A673 (cell line): ENCODE measurements at regions of chr14 and their contacts with region 1.

Region 1: GRCh38 chr14:68248481-68249255 is 429.1 kb downstream of the RAD51B start:
- DNase-seq: peak; percentile 77
- H3K4me3 ChIP-seq: no peak overlapping the region
- H3K27ac ChIP-seq: no peak overlapping the region
- H3K4me1 ChIP-seq: peaks cover 58% of the 10 kb centered on the region
- H3K27me3 ChIP-seq: no peaks in the 10 kb centered on the region
- CTCF ChIP-seq: peak; percentile 69

Region 2: GRCh38 chr14:67943947-67944346 is 304.7 kb before region 1 on chr14:
- CTCF ChIA-PET with region 1: no interaction called
- POLR2A ChIA-PET with region 1: no interaction called
- intact Hi-C with region 1: loop called (anchors 2 kb)
- DNase-seq: peak; percentile 86
- H3K4me3 ChIP-seq: no peak overlapping the region
- H3K27ac ChIP-seq: no peak overlapping the region
- H3K4me1 ChIP-seq: no peaks in the 10 kb centered on the region
- H3K27me3 ChIP-seq: no peaks in the 10 kb centered on the region
- CTCF ChIP-seq: peak; percentile 85

Region 3: DNA sequence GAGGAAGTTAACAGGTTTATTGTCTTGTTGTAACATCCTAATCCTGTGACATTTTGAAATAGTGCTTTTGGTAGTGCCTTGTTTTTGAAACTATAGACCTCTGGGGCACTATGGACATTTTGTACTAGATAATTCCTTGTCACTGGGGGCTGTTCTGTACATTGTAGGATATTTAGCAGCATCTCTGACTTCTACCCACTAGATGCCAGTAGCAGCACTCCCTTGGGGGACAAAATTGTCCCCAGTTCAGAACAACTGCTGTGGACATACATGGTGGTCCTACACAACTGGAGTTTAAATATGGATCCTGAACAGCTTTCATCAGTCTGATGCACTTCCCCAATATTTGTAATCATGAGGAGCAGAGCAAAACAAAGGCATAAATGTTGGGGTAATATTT is 164.4 kb before region 1 on chr14:
- CTCF ChIA-PET with region 1: no interaction called
- POLR2A ChIA-PET with region 1: no interaction called
- intact Hi-C with region 1: loop called (anchors 5 kb)
- DNase-seq: peak; percentile 51
- H3K4me3 ChIP-seq: no peak overlapping the region
- H3K27ac ChIP-seq: no peak overlapping the region
- H3K4me1 ChIP-seq: peaks cover 14% of the 10 kb centered on the region
- H3K27me3 ChIP-seq: no peaks in the 10 kb centered on the region
- CTCF ChIP-seq: peak; percentile 53

Region 4: GRCh38 chr14:68297876-68298469 is 49.3 kb after region 1 on chr14:
- CTCF ChIA-PET with region 1: no interaction called
- POLR2A ChIA-PET with region 1: no interaction called
- intact Hi-C with region 1: loop called (anchors 1 kb)
- DNase-seq: peak; percentile 31
- H3K4me3 ChIP-seq: no peak overlapping the region
- H3K27ac ChIP-seq: no peak overlapping the region
- H3K4me1 ChIP-seq: peaks cover 9% of the 10 kb centered on the region
- H3K27me3 ChIP-seq: no peaks in the 10 kb centered on the region
- CTCF ChIP-seq: peak; percentile 40; the same call in 1 of the 2 replicates

Region 5: GRCh38 chr14:68458840-68459469 is 210.3 kb after region 1 on chr14:
- CTCF ChIA-PET with region 1: no interaction called
- POLR2A ChIA-PET with region 1: no interaction called
- intact Hi-C with region 1: no loop called
- DNase-seq: peak; percentile 29
- H3K4me3 ChIP-seq: no peak overlapping the region
- H3K27ac ChIP-seq: no peak overlapping the region
- H3K4me1 ChIP-seq: peaks cover 12% of the 10 kb centered on the region
- H3K27me3 ChIP-seq: no peaks in the 10 kb centered on the region
- CTCF ChIP-seq: no peak

Region 6: DNA sequence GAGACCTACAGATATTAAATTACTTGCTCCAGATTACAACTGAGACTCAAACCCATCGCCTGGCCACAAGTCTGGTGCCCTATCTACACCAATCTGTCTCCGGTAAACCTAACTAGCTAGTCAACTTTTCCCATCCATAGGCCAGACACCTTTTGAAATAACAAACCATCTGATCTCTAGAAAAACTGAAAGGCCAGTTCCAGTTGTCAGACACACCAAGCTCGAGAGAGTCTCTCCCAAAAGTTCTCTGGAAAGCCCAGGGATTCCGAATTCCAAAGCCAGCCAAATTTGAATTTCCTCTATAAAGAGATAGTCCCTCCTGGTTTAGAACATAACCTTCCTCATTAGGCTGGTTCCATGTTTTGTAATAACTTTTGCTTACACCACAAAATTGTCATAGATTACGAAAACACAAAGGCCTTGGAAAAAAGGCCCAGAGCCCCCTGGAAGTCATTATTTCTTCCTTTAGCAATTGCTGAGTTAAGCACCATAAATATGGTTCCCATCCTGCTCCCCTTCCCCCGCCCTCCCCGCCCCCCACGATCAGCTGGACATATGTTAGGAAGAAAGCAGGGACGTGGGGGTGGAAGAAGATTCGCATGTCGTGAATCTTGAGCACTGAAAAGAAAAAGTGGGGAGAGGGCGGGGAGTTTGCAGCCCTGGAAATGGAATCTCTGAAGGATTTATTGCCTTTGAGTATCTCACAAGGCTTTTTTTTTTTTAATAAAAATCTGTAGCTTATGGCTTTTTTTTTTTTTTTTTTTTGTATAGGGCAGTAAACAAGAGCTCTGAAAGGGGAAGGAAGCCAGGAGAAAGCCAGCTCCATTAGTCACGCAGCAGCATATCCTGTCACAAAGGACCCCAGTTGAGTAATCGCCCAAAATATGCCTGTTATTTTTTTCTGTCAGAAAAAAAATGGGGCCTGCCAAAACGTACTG is 433.8 kb after region 1 on chr14:
- CTCF ChIA-PET with region 1: no interaction called
- POLR2A ChIA-PET with region 1: no interaction called
- intact Hi-C with region 1: loop called (anchors 5 kb)
- DNase-seq: peak; percentile 98
- H3K4me3 ChIP-seq: no peak overlapping the region
- H3K27ac ChIP-seq: peak overlapping the region; percentile 99
- H3K4me1 ChIP-seq: peaks cover 51% of the 10 kb centered on the region
- H3K27me3 ChIP-seq: no peaks in the 10 kb centered on the region
- CTCF ChIP-seq: no peak

Region 7: DNA sequence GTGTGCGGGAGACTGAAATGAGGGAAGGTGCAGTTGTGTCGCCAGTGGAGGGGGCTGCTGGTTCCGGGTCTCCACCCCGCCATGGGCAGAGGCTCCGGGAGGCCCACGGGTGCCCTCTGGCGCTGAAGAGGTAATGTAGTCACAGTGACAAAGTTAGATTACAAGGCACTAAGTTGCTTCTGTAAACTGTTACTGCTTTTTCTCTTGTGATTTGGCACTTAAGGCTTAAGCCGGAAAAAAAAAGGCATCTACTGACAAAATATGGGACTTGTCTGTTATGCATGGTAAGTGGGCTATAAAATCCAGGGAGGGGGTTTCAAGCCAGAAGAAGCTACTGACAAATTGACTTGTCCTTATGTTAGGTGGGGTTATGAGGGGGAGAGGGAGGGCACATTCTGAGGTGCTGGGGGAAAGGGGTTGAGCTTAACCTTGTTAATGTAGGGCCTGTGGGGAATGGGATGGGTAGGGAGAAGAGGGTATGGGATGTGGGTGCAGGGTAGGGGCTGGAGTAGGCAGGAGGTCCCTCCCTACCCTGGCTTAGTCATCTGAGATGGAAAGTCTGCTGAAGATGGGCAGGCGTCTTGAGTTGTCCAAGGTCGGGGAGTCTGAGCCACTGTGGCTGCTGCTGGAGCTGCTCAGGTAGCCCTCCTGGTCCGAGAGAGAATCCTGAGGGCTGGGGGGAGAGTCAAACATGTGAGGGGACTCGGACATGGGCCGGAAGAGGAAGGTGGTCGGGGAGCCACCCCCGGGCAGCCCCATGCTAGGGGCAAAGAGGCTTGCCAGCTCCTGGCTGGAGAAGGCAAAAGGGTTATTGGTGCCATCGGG is 540.5 kb after region 1 on chr14:
- CTCF ChIA-PET with region 1: interaction called, 22 read pairs
- POLR2A ChIA-PET with region 1: interaction called, 4 read pairs
- intact Hi-C with region 1: loop called (anchors 1 kb)
- DNase-seq: peak; percentile 93
- H3K4me3 ChIP-seq: peak overlapping the region; percentile 74
- H3K27ac ChIP-seq: peak overlapping the region; percentile 55
- H3K4me1 ChIP-seq: peaks cover 29% of the 10 kb centered on the region
- H3K27me3 ChIP-seq: no peaks in the 10 kb centered on the region
- CTCF ChIP-seq: peak; percentile 86

Region 8: DNA sequence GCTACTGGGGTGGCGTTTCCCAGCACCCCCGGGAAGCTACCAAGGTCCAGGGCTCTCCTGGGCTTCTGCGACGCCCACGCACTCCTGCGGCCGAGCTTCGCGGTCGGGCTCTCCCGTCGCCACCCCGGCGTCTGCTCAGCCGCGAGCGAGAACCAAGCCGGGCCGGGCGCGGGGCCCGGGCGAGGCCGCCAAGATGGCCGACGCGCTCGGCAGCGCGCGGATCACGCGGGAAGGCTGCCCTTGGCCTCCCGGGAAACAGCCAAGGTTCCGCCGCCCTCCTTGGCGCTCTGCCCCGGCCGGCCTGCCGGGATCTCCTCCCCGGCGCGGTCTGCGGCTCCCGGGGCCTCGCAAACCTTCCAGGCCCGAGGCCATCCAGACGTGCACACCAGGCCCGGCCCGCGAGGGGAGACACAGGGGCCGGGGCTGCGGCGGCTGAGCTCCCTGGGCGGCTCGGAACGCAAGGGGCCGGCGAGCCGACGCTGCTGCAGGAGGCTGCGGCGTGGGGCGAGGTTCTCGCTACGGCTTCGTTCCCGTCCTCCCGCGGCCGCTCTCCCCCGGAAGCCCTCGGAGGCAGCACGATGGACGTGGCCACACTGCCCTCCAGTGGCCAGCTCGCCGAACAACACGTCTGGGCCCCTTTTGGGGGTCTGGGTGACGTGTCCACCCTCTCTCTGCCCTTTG is 567.7 kb after region 1 on chr14:
- CTCF ChIA-PET with region 1: interaction called, 12 read pairs
- POLR2A ChIA-PET with region 1: no interaction called
- intact Hi-C with region 1: loop called (anchors 1 kb)
- DNase-seq: peak; percentile 95
- H3K4me3 ChIP-seq: peak overlapping the region; percentile 47
- H3K27ac ChIP-seq: peak overlapping the region; percentile 95
- H3K4me1 ChIP-seq: peaks cover 24% of the 10 kb centered on the region
- H3K27me3 ChIP-seq: no peaks in the 10 kb centered on the region
- CTCF ChIP-seq: peak; percentile 96